CD8-positive, alpha-beta memory T cell (primary cell): ENCODE measurements at regions of chr1 and their contacts with region 1.

Region 1: GRCh38 chr1:76154206-76154956 is 79.8 kb downstream of the ST6GALNAC3 start:
- DNase-seq: peak; percentile 61 to 83 (median 65)
- H3K4me3 ChIP-seq: peak overlapping the region; percentile 61
- H3K4me3 Mint-ChIP-seq: peak overlapping the region; percentile 45 to 95 (median 92)
- H3K27ac ChIP-seq: no peak overlapping the region
- H3K27ac Mint-ChIP-seq: peak overlapping the region in 7 of 8 donors; percentile 87 to 94 (median 91)
- H3K4me1 ChIP-seq: peaks cover 5% of the 10 kb centered on the region
- H3K4me1 Mint-ChIP-seq: peaks cover 10 to 14% (median 11%) of the 10 kb centered on the region in 3 donors
- H3K27me3 ChIP-seq: no peaks in the 10 kb centered on the region
- H3K27me3 Mint-ChIP-seq: peaks cover 0 to 11% of the 10 kb centered on the region in 2 donors

Region 2: DNA sequence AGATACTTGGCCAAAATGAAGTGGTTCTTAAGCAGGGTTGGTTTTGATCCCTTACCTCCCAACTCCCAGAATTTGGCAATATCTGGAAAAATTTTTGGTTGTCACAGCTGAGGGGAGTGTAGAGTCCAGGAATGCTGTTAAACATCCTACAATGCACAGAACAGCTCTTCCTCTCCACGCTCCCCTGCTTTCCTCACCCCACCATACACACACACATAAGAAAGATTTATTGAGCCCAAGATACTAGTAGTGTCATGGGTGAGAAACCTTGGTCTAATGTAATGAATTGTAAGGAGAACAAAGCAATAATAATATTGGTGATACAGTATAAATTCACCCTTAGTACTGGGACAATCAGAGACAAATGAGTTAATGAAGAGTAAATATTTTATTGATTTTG is 269.9 kb before region 1 on chr1:
- CTCF ChIA-PET with region 1: no interaction called
- POLR2A ChIA-PET with region 1: no interaction called
- DNase-seq: no peak
- H3K4me3 ChIP-seq: no peak overlapping the region
- H3K4me3 Mint-ChIP-seq: no peak overlapping the region
- H3K27ac ChIP-seq: no peak overlapping the region
- H3K27ac Mint-ChIP-seq: no peak overlapping the region
- H3K4me1 ChIP-seq: no peaks in the 10 kb centered on the region
- H3K4me1 Mint-ChIP-seq: no peaks in the 10 kb centered on the region
- H3K27me3 ChIP-seq: no peaks in the 10 kb centered on the region
- H3K27me3 Mint-ChIP-seq: no peaks in the 10 kb centered on the region

Region 3: DNA sequence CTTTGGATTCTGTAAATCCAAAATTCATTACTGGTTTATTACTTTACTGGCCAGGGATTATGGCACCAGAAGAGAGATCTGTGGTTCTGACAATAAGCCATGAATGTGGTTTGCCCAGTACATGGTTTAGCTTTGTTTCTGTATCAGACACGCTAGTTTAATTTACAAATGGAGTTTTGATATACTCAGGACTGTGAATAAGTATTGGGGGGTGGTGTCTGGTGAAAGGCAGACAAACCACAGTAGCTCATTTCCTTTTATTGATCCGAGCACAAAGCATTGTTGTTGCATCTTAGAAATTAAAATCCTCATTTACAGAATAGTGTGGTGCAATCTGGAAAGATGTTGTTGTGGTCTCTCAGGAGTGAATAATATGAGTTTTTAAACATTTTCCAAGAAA is 16.1 kb after region 1 on chr1:
- CTCF ChIA-PET with region 1: interaction called, 13 read pairs
- POLR2A ChIA-PET with region 1: interaction called, 3 read pairs
- DNase-seq: no peak
- H3K4me3 ChIP-seq: no peak overlapping the region
- H3K4me3 Mint-ChIP-seq: peak overlapping the region in 3 of 7 donors; percentile 35 to 84 (median 45)
- H3K27ac ChIP-seq: no peak overlapping the region
- H3K27ac Mint-ChIP-seq: peak overlapping the region in 2 of 8 donors; percentile 6 to 43
- H3K4me1 ChIP-seq: peaks cover 7% of the 10 kb centered on the region
- H3K4me1 Mint-ChIP-seq: peaks cover 12 to 29% (median 12%) of the 10 kb centered on the region in 3 donors
- H3K27me3 ChIP-seq: no peaks in the 10 kb centered on the region
- H3K27me3 Mint-ChIP-seq: no peaks in the 10 kb centered on the region

Region 4: GRCh38 chr1:76219366-76219818 is 65.0 kb after region 1 on chr1:
- CTCF ChIA-PET with region 1: no interaction called
- POLR2A ChIA-PET with region 1: no interaction called
- DNase-seq: no peak
- H3K4me3 ChIP-seq: no peak overlapping the region
- H3K4me3 Mint-ChIP-seq: no peak overlapping the region
- H3K27ac ChIP-seq: no peak overlapping the region
- H3K27ac Mint-ChIP-seq: no peak overlapping the region
- H3K4me1 ChIP-seq: no peaks in the 10 kb centered on the region
- H3K4me1 Mint-ChIP-seq: no peaks in the 10 kb centered on the region
- H3K27me3 ChIP-seq: no peaks in the 10 kb centered on the region
- H3K27me3 Mint-ChIP-seq: peaks cover 0 to 1% of the 10 kb centered on the region in 2 donors

Region 5: DNA sequence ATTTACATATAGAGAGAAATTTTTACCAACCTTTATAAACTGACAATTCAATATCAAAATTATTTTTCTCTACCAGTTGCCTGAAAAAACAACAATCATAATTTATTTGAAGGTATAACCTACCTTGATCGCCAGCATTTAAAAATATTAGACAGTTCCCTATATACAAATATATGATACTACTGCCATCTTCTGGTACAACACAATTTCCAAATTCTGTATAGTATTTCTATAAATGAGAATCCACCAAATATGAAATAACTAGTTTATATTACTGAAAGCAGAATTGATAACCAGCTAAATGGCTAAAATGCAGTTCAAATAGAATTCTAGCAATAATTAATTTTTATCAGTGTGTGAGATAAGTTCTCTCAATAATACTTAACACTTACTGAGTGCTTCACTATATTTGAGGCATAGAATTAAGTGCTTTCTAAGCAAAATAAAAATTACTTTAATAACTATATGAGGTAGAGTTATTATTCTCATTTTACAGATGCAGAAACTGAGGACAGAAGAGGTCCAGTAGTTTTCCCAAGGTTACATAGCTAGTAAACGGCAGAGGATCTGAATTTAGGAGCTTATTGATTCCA is 989.2 kb after region 1 on chr1:
- CTCF ChIA-PET with region 1: interaction called, 11 read pairs
- POLR2A ChIA-PET with region 1: no interaction called
- DNase-seq: peak in 1 of 5 donors; percentile 5
- H3K4me3 ChIP-seq: no peak overlapping the region
- H3K4me3 Mint-ChIP-seq: no peak overlapping the region
- H3K27ac ChIP-seq: no peak overlapping the region
- H3K27ac Mint-ChIP-seq: no peak overlapping the region
- H3K4me1 ChIP-seq: no peaks in the 10 kb centered on the region
- H3K4me1 Mint-ChIP-seq: peaks cover 3 to 6% (median 5%) of the 10 kb centered on the region in 3 donors
- H3K27me3 ChIP-seq: no peaks in the 10 kb centered on the region
- H3K27me3 Mint-ChIP-seq: no peaks in the 10 kb centered on the region